ENCODE measurements at regions of chr18 and their contacts with region 1.

Region 1: GRCh38 chr18:53040286-53040685 is 700.3 kb downstream of the DCC start:
- DNase-seq: no peak
- H3K4me3 ChIP-seq: no peak overlapping the region
- H3K27ac ChIP-seq: no peak overlapping the region
- H3K4me1 ChIP-seq: no peaks in the 10 kb centered on the region
- H3K27me3 ChIP-seq: no peaks in the 10 kb centered on the region
- CTCF ChIP-seq: no peak
- POLR2A ChIP-seq: no peak

Region 2: DNA sequence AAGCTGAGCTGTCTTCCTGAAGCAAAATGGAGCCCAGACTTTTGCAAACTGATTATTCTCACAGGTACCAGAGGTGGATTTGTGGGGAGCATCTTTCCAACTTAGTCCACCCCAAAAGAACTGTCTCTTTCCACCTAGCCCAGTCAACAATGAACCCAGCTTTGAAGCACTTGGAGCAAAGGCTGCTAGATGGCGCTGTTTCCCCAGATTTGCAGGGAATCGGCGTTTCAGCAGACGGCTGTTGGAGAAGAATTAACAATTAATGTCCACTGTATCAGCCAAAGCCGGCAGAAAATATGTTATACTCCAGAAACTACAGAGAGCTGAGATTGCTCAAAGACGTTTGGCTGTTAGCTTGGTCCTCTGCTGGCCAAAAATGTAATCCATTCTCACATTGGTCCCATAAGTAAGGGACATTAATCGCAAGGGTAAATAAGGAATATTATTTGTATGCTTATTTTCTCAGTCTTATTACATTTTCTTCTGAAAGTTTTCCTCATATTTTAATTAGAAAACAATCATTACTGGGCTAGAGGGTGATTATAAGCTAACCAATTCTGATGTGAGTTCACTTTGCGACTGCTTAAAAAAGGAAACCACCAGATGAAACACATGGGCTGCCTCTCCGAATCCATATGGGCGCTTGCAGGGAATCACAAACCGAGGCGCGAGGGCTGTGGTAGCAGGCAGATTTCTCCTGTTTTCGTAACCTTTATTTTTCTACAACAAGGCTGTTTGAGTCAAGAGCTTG is 1419.0 kb before region 1 on chr18:
- CTCF ChIA-PET with region 1: no interaction called
- POLR2A ChIA-PET with region 1: no interaction called
- dilution Hi-C with region 1: no loop called
- intact Hi-C with region 1: loop called (anchors 5 kb)
- DNase-seq: peak; percentile 1
- H3K4me3 ChIP-seq: no peak overlapping the region
- H3K27ac ChIP-seq: no peak overlapping the region
- H3K4me1 ChIP-seq: no peaks in the 10 kb centered on the region
- H3K27me3 ChIP-seq: no peaks in the 10 kb centered on the region
- CTCF ChIP-seq: peak; percentile 31 to 43
- POLR2A ChIP-seq: no peak

Region 3: GRCh38 chr18:53458944-53459580 is 418.8 kb after region 1 on chr18:
- CTCF ChIA-PET with region 1: no interaction called
- POLR2A ChIA-PET with region 1: no interaction called
- dilution Hi-C with region 1: no loop called
- intact Hi-C with region 1: no loop called
- DNase-seq: no peak
- H3K4me3 ChIP-seq: no peak overlapping the region
- H3K27ac ChIP-seq: no peak overlapping the region
- H3K4me1 ChIP-seq: no peaks in the 10 kb centered on the region
- H3K27me3 ChIP-seq: no peaks in the 10 kb centered on the region
- CTCF ChIP-seq: no peak
- POLR2A ChIP-seq: no peak

Measured in endothelial cell of umbilical vein (primary cell).